ENCODE measurements at regions of chr3 and their contacts with region 1.

Region 1: DNA sequence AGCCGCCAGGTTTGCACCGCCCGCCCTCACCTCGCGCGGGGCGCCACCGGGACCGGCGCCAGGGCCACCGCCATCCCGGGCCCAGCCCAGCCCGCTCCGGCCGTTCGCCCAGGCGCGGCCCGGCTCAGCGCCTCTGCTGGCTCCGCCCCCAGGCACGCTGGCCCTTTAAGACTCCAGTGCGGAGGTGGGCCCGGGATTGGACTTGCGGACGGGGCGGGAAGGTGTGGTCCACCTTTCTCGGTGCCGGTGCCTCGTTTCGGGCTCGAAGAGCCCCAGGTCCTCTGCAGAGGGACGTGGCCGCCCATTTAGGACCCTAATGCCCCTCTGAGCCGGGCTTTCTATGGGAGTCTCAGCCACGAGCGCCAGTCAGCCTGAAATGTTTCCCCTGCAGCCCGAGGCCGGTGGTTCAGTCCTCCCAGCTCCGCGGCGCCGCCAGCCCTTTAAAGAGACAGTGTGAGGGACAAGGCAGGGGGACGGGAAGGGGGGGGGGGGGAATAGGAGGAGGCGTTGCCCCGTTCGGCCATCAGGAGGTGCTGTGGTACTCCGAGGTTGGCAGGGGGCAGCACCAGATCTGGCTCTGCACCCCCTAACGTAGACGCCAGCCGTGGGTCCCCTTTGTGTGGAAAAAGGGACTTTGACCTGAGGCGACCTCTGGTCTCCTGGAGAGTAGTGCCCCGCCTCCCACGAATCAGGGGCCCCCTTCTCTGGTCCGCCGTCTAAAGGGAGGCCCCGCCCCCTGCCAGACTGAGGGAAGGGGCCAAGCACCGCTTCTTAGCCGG is 1.0 kb downstream of the HYAL2 start:
- DNase-seq: peak; percentile 90 to 91
- ATAC-seq: peak; percentile 60 to 79 (median 74)
- H3K4me3 ChIP-seq: peak overlapping the region; percentile 57 to 88 (median 80)
- H3K27ac ChIP-seq: peak overlapping the region; percentile 91 to 99 (median 97)
- H3K4me1 ChIP-seq: peaks cover 29 to 90% (median 71%) of the 10 kb centered on the region in 9 donors
- H3K27me3 ChIP-seq: no peaks in the 10 kb centered on the region
- CTCF ChIP-seq: peak; percentile 28 to 79 (median 64)

Region 2: DNA sequence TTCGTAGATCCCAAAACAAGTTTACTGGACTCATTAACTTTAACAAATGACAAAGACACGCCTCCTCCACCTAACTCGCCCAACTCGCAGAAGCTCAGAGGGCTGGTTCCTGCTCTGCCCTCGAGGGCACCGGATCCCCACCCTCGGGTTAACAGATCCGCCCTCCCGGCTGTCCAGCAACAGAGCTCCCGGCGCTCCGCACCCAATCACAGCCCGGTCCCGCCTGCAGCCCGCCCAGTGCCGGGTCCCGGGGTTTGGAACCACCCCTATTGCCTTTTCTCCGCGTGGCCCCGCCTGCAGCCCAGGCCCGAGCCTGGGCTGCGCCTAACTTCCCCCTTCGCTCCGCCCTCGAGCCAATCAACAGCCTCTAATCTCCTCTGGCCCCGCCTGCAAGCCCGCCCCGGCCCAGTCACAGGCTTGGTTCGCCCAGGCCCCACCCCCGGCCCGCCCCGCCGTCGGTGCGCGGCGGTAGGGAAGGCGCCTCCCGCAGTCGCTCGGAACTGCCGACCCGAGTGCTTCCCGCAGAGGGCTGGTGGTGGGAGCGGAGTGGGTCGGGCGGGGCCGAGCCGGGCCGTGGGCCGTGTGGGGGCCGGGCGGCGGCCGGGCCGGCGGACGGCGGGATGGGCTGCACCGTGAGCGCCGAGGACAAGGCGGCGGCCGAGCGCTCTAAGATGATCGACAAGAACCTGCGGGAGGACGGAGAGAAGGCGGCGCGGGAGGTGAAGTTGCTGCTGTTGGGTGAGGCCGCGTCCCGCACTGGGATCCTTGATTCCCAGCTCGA is 85.6 kb before region 1 on chr3 and contains the start of gene GNAI2:
- intact Hi-C with region 1: loop called in 1 of 10 experiments (anchors 5 kb)
- DNase-seq: peak; percentile 98 to 99
- ATAC-seq: peak; percentile 91 to 95 (median 92)
- H3K4me3 ChIP-seq: peak within 1 kb of the TSS; percentile 67 to 98 (median 90)
- H3K27ac ChIP-seq: peak within 1 kb of the TSS; percentile 86 to 100 (median 94)
- H3K4me1 ChIP-seq: peaks cover 20 to 51% (median 40%) of the 10 kb centered on the region in 9 donors
- H3K27me3 ChIP-seq: no peaks in the 10 kb centered on the region
- CTCF ChIP-seq: no peak
- total RNA-seq, gene GNAI2: 112 to 270 (median 146) TPM

Region 3: GRCh38 chr3:50260027-50260941 is 61.2 kb before region 1 on chr3:
- intact Hi-C with region 1: loop called in 3 of 10 experiments (anchors 1 to 10 kb)
- DNase-seq: peak; percentile 94 to 96
- ATAC-seq: peak; percentile 76 to 91 (median 84)
- H3K4me3 ChIP-seq: peak overlapping the region; percentile 38 to 80 (median 69)
- H3K27ac ChIP-seq: peak overlapping the region; percentile 94 to 100 (median 99)
- H3K4me1 ChIP-seq: peaks cover 38 to 82% (median 53%) of the 10 kb centered on the region in 9 donors
- H3K27me3 ChIP-seq: no peaks in the 10 kb centered on the region
- CTCF ChIP-seq: peak; percentile 96 to 99 (median 98)

Region 4: GRCh38 chr3:50272911-50273693 is 48.4 kb before region 1 on chr3:
- intact Hi-C with region 1: loop called in 4 of 10 experiments (anchors 2 to 10 kb)
- DNase-seq: peak; percentile 83 to 90
- ATAC-seq: peak; percentile 43 to 84 (median 70)
- H3K4me3 ChIP-seq: peak overlapping the region in 9 of 10 donors; percentile 18 to 54 (median 38)
- H3K27ac ChIP-seq: peak overlapping the region in 5 of 10 donors; percentile 1 to 44 (median 41)
- H3K4me1 ChIP-seq: peaks cover 2 to 60% (median 42%) of the 10 kb centered on the region in 9 donors
- H3K27me3 ChIP-seq: peaks cover 0 to 47% (median 10%) of the 10 kb centered on the region in 7 donors
- CTCF ChIP-seq: peak; percentile 96 to 99 (median 98)

Region 5: GRCh38 chr3:50299929-50300685 is 21.4 kb before region 1 on chr3:
- intact Hi-C with region 1: loop called in 2 of 10 experiments (anchors 1 to 2 kb)
- DNase-seq: no peak
- ATAC-seq: no peak
- H3K4me3 ChIP-seq: peak overlapping the region; percentile 16 to 82 (median 57)
- H3K27ac ChIP-seq: peak overlapping the region; percentile 66 to 95 (median 94)
- H3K4me1 ChIP-seq: peaks cover 22 to 59% (median 52%) of the 10 kb centered on the region in 9 donors
- H3K27me3 ChIP-seq: no peaks in the 10 kb centered on the region
- CTCF ChIP-seq: no peak

Measured in heart right ventricle (tissue), 16 donors.